Right cardiac atrium (tissue), 5 donors: ENCODE measurements at regions of chr16 and their contacts with region 1.

Region 1: DNA sequence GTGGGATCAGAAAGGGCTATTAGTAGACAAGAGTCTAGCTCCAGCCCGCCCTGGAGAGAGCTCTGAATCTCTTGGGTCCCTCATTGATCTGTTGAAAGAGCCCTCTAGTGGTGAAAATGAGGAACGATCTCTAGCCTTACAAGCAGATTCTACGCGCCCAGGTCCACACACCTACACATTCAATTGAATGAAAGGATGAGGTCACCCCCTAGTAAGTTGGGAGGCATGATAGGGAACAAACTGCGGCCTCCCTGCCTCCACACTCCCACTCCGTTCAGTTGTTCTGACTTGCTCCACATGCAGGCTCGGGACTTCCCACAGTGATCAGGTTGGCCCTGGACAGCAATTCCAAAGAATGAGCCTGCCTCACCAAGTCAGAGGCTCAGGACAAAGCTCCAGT is 2.9 kb upstream of the CACNG3 start:
- DNase-seq: peak in 1 of 3 donors; percentile 56
- ATAC-seq: peak in 1 of 2 donors; percentile 62
- H3K4me3 ChIP-seq: no peak overlapping the region
- H3K27ac ChIP-seq: no peak overlapping the region
- H3K4me1 ChIP-seq: no peaks in the 10 kb centered on the region
- H3K27me3 ChIP-seq: no peaks in the 10 kb centered on the region

Region 2: GRCh38 chr16:23578101-23578830 is 674.9 kb before region 1 on chr16:
- intact Hi-C with region 1: no loop called
- DNase-seq: no peak
- ATAC-seq: no peak
- H3K4me3 ChIP-seq: no peak overlapping the region
- H3K27ac ChIP-seq: no peak overlapping the region
- H3K4me1 ChIP-seq: peaks cover 4% of the 10 kb centered on the region
- H3K27me3 ChIP-seq: no peaks in the 10 kb centered on the region

Region 3: DNA sequence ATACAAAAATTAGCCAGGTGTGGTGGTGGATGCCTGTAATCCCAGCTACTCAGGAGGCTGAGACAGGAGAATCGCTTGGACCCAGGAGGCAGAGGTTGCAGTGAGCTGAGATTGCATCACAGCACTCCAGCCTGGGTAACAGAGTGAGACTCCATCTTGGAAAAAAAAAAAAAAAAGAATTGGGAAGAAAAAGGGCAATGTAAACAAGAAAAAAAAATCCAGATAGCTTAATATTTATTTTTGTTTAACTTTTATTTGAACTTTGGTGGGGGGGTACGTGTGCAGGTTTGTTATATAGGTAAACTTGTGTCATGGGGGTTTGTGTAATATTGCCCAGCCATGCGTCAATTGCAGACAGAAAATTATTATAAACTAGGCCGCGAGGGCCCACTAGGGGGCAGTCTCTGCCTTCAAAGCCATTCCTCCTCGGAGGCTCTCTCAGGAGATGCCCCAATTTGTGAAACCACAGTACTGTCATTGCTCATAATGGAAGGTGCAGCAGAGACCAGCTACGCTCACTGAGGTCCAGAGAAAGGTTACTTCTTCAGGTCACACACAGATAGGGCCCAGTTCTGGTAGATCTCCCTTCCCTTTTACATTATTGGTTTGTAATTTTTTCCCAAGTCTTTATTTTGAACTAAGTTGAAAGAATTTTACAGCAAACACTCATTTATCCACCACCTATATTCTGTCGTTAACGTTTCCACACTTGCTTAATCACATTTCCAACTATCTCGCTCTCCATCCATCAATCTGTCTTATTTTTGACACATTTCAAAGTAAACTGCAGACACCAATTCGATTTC is 211.2 kb before region 1 on chr16:
- intact Hi-C with region 1: loop called in 2 of 4 experiments (anchors 10 kb)
- DNase-seq: peak; percentile 52 to 82 (median 68)
- ATAC-seq: peak; percentile 31 to 74
- H3K4me3 ChIP-seq: no peak overlapping the region
- H3K27ac ChIP-seq: no peak overlapping the region
- H3K4me1 ChIP-seq: no peaks in the 10 kb centered on the region
- H3K27me3 ChIP-seq: no peaks in the 10 kb centered on the region

Region 4: GRCh38 chr16:24054741-24055491 is 198.3 kb before region 1 on chr16:
- intact Hi-C with region 1: loop called in 2 of 4 experiments (anchors 10 kb)
- DNase-seq: no peak
- ATAC-seq: no peak
- H3K4me3 ChIP-seq: no peak overlapping the region
- H3K27ac ChIP-seq: no peak overlapping the region
- H3K4me1 ChIP-seq: no peaks in the 10 kb centered on the region
- H3K27me3 ChIP-seq: no peaks in the 10 kb centered on the region

Region 5: DNA sequence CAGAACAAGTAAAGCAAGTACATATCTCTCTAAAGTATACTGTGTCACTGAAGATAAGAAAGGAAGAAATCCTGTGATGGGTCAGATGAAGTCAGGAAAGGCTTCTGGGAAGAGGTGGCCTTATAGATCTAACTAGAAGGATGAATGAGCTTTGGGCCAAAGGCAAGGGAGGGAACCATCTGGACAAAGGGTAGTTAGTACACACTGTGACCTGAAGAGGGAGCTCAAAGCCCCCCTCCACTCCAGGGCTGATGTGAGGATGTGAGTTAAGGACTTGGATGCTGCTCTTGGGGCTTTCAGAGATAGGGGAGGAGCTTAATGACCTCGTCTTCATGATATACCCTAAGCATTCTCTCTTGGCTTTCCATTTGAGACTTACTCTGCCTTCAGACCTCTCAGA is 182.3 kb before region 1 on chr16:
- intact Hi-C with region 1: loop called in 2 of 4 experiments (anchors 5 to 10 kb)
- DNase-seq: peak in 1 of 3 donors; percentile 16
- ATAC-seq: peak in 1 of 2 donors; percentile 39
- H3K4me3 ChIP-seq: no peak overlapping the region
- H3K27ac ChIP-seq: no peak overlapping the region
- H3K4me1 ChIP-seq: no peaks in the 10 kb centered on the region
- H3K27me3 ChIP-seq: no peaks in the 10 kb centered on the region

Region 6: DNA sequence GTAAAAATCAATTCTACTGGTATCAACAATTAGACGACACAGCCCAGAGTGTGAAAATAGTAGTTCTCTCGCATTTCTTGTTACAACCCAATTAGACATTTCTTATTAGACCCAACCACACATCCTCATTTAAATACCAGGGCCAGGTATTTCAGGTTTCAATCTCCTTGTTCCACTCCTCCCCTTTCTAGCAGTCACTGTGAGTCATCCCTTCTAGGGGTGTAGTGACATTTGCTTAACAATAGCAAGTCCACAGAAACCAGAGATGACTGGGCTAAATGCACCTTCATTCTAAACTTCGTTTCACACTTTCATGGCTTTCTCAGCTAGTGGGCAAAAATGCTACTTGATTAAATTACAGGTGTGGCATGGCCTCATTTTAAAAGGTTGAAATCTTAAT is 113.9 kb before region 1 on chr16:
- intact Hi-C with region 1: loop called in 1 of 4 experiments (anchors 10 kb)
- DNase-seq: no peak
- ATAC-seq: no peak
- H3K4me3 ChIP-seq: no peak overlapping the region
- H3K27ac ChIP-seq: no peak overlapping the region
- H3K4me1 ChIP-seq: no peaks in the 10 kb centered on the region
- H3K27me3 ChIP-seq: no peaks in the 10 kb centered on the region

Region 7: DNA sequence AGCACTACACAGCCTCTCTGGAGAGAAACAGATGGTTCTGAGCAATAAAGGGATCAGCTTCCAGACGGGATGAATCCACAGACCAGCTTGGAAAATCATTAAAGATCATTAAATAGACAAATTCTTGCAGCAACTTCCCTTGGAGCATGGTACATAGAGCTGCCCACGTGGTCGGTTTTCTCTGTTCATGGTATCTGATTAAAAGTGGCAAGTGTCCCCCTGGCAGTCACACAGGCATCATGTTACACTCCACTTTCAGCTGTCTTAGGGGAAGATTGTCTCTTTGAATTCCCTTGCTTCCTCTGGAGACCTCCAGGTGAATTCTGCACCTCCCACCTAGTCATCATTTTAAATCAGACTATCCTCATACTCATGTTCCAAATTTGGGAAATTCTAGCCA is 89.3 kb before region 1 on chr16:
- intact Hi-C with region 1: no loop called
- DNase-seq: no peak
- ATAC-seq: no peak
- H3K4me3 ChIP-seq: no peak overlapping the region
- H3K27ac ChIP-seq: no peak overlapping the region
- H3K4me1 ChIP-seq: no peaks in the 10 kb centered on the region
- H3K27me3 ChIP-seq: no peaks in the 10 kb centered on the region

Region 8: DNA sequence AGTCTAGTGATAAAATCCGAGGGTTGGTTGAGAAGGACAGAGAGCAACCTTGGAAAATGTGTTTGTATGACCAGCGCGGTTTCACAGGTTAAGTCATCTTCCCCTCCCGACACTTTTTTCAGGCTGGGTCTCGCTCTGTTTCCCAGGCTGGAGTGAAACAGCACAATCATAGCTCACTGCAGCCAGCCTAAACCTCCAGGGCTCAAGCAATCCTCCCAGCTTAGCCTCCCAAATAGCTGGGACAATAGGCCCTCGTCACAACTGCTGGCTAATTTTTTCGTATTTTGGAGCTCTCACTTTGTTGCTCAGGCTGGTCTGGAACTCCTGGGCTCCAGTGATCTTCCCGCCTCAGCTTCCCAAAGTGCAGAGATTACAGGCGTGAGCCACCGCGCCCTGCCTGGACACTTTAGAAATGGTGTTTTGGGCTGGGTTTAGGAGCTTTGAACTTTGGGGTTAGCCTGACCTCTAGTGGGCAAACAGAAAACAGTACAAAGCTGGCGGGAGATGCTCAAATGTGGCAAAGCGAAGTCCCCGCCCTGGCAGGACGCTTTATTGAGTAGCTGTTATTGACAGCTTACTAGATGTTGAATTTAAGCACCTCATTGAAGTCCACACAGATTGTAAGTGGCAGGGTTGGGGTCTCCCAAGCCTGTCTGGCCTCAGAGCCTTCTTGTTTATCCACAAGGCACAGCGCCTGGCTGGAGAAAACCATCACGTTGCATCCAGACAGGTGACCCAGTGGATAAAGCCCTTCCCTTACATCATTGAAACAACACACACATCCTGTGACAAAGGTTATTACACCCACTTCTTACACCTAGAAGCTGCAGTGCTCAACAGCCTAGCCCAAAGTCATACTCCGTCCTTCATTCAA is 251.5 kb after region 1 on chr16:
- intact Hi-C with region 1: loop called in 1 of 4 experiments (anchors 5 kb)
- DNase-seq: peak; percentile 41 to 63 (median 48)
- ATAC-seq: peak; percentile 84 to 89
- H3K4me3 ChIP-seq: no peak overlapping the region
- H3K27ac ChIP-seq: no peak overlapping the region
- H3K4me1 ChIP-seq: no peaks in the 10 kb centered on the region
- H3K27me3 ChIP-seq: no peaks in the 10 kb centered on the region